Left lung (tissue), 14 donors: ENCODE measurements at regions of chr11 and their contacts with region 1.

Region 1: DNA sequence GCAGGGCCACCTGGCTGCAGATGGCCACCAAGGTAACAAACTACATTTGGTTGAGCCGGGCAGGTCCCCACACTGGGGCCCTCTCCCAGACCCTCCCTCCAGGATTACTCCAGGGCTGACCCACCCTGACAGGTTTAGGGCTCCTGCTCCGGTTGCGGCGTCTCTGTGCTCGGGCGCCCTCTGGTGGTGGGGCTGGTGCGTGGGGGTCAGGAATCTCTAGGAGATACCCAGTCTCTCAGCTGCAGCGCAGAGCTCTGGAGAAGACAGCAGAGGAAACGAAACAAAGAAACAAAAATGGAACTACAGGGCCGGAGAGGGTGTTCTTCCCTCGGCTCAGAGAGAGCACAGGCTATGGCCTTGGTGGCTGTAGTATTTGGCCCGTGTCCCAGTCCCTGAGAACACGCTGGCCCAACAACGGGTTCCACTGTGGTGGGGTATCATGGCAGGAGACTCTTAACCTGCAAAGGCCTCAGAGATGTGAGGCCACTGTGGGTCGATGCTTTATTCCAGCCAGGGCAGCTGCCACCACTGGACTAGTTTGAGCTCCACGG is 2.4 kb downstream of the C11orf96 start:
- DNase-seq: peak in 3 of 4 donors; percentile 61 to 94 (median 73)
- ATAC-seq: peak; percentile 71
- H3K4me3 ChIP-seq: peak overlapping the region; percentile 53 to 54
- H3K27ac ChIP-seq: peak overlapping the region; percentile 73 to 90
- H3K4me1 ChIP-seq: peaks cover 3 to 36% of the 10 kb centered on the region in 2 donors
- H3K27me3 ChIP-seq: peaks cover 0 to 52% of the 10 kb centered on the region in 2 donors
- CTCF ChIP-seq: peak; percentile 77 to 88

Region 2: DNA sequence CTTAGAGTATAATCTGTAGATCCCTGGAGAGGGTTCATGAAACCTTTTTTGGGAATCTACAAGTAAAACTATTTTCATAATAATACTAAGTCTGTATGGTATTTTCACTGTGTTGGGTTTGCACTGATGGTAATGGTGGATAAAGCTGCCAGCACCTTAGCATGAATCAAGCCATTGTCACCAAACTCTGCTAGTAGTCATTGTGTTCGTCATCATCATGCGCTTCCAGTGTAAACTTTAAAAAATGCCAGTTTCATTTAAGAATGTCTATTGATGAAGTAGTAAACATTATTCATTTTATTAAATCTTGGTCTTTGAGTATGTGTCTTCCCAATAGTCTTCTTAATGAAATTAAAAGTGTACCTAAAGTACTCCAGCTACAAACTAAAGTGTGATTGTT is 49.2 kb before region 1 on chr11:
- intact Hi-C with region 1: loop called in 1 of 2 experiments (anchors 10 kb)
- DNase-seq: no peak
- ATAC-seq: no peak
- H3K4me3 ChIP-seq: no peak overlapping the region
- H3K27ac ChIP-seq: no peak overlapping the region
- H3K4me1 ChIP-seq: no peaks in the 10 kb centered on the region
- H3K27me3 ChIP-seq: no peaks in the 10 kb centered on the region
- CTCF ChIP-seq: no peak

Region 3: DNA sequence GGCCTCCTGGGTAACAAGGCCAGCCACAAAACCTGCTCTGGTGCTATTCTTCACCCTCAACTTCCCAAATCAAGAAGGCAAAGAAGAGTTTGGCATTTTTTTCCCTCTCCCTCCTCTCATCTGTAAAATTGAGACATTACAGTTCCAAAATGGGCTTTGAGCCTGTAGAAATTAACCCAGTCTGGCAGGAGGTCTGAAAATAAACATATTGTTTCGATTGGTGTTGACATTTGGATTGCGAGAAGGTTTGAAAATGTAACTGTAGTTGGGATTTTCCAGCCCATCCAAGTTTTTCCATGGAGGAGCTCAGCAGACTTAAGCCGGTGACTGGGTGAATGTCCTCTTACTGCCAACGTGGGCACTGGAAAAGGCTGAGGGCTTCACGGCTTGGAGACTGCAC is 400.1 kb after region 1 on chr11:
- intact Hi-C with region 1: no loop called
- DNase-seq: peak in 1 of 4 donors; percentile 19
- ATAC-seq: no peak
- H3K4me3 ChIP-seq: no peak overlapping the region
- H3K27ac ChIP-seq: no peak overlapping the region
- H3K4me1 ChIP-seq: no peaks in the 10 kb centered on the region
- H3K27me3 ChIP-seq: peaks cover 0 to 35% of the 10 kb centered on the region in 2 donors
- CTCF ChIP-seq: no peak